ENCODE measurements at regions of chr18 and their contacts with region 1.

Region 1: DNA sequence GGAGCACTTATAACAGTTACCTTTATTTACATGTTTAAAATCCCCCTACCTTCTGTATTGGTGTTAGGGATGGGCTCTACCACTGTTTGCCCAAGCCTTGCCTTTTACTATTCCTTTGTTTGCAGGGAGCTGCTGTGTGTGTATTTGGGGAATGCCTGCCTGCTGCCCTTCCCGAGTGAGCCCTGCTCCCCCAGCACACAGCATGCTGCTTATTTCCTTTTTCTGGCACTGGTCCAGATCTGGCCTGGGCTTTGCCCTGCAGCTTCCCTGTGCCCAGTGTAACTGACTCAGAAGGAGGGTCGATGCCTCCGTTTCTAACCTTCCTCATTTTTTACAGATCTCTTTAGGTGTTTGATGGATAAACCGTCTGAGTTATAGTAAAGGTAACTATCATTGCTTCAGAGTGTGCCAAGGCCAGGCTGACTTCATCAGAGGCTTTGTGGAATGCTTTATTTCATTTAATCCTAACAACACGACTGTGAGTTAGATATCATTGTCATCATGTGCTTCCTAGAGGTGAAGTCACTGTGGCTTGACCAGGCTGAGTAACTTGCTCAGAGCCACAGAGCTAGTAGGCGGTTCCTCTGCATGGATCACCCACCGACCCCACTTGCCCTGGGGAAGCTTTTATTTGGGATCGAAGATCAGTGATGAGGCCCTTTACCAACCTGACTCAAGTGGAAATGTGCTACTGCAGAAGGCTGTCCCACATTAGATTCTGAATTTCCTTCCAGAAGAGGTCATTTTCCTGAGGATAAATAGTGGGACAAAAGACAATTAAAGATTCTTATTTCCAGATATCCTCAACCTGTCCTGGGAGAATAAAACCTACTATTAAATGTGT is 238.8 kb downstream of the ZNF407 start:
- DNase-seq: peak; percentile 69
- H3K4me3 ChIP-seq: no peak overlapping the region
- H3K27ac ChIP-seq: peak overlapping the region; percentile 21
- H3K4me1 ChIP-seq: peaks cover 37% of the 10 kb centered on the region
- H3K27me3 ChIP-seq: no peaks in the 10 kb centered on the region
- CTCF ChIP-seq: no peak
- POLR2A ChIP-seq: no peak

Region 2: DNA sequence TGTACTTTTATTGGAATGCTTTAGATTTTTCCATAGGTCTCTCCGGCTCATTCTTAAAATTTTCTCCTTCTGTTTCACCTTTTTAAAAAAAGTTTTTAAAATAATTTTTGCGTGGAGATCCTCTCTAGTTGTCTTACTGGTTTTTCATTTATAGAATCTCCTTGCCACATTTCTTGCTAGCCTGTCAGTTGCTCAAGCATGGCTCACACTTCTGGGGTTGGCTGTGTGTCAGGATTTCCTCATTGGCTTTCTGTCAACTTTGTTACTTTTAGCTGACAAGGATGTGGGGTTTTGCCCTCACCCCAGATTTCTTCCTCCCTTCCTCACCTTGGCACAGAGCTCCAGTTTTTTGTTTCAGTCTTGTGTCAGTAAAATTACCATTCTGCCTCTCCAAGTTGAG is 114.3 kb before region 1 on chr18:
- CTCF ChIA-PET with region 1: interaction called, 3 read pairs
- POLR2A ChIA-PET with region 1: no interaction called
- dilution Hi-C with region 1: no loop called
- intact Hi-C with region 1: loop called (anchors 5 kb)
- DNase-seq: peak; percentile 64
- H3K4me3 ChIP-seq: no peak overlapping the region
- H3K27ac ChIP-seq: no peak overlapping the region
- H3K4me1 ChIP-seq: peaks cover 3% of the 10 kb centered on the region
- H3K27me3 ChIP-seq: no peaks in the 10 kb centered on the region
- CTCF ChIP-seq: no peak
- POLR2A ChIP-seq: no peak

Region 3: DNA sequence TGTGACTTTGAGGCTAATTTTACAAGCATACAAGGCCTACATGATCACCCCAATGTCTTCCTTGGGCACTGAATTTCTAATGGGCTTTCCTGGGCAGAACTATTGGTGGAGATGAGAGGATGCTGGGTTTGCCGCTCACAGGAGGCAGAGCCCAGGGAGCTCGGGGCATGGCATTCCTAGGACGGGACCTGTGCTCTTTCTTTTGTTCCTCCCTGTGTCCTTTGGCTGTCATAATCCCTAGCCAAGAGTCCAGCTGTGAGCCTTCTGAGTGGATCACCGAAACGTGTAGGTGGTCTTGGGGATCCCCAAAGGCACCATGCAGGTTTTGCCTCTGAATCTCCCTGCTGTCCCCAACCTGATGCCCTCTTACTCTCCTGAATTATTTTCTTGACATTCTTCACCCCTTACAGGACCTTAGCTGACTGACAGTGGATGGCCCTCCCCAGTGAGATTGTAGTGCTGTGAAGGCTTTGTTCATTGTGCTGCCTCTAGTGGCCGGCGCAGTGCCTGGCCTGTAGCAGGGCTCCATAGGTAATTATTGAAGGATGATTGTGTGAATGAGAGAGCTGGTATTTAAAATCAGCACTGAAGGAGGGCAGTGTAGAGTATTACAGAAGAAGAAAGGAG is 17.0 kb before region 1 on chr18:
- CTCF ChIA-PET with region 1: interaction called, 10 read pairs
- POLR2A ChIA-PET with region 1: no interaction called
- dilution Hi-C with region 1: no loop called
- intact Hi-C with region 1: no loop called
- DNase-seq: no peak
- H3K4me3 ChIP-seq: no peak overlapping the region
- H3K27ac ChIP-seq: no peak overlapping the region
- H3K4me1 ChIP-seq: no peaks in the 10 kb centered on the region
- H3K27me3 ChIP-seq: no peaks in the 10 kb centered on the region
- CTCF ChIP-seq: peak; percentile 52 to 55
- POLR2A ChIP-seq: no peak

Region 4: GRCh38 chr18:74906184-74906583 is 69.7 kb after region 1 on chr18:
- CTCF ChIA-PET with region 1: no interaction called
- POLR2A ChIA-PET with region 1: no interaction called
- dilution Hi-C with region 1: no loop called
- intact Hi-C with region 1: loop called (anchors 10 kb)
- DNase-seq: no peak
- H3K4me3 ChIP-seq: no peak overlapping the region
- H3K27ac ChIP-seq: no peak overlapping the region
- H3K4me1 ChIP-seq: no peaks in the 10 kb centered on the region
- H3K27me3 ChIP-seq: no peaks in the 10 kb centered on the region
- CTCF ChIP-seq: no peak
- POLR2A ChIP-seq: no peak

Region 5: GRCh38 chr18:75070625-75071483 is 234.3 kb after region 1 on chr18:
- CTCF ChIA-PET with region 1: no interaction called
- POLR2A ChIA-PET with region 1: no interaction called
- dilution Hi-C with region 1: no loop called
- intact Hi-C with region 1: loop called (anchors 1 kb)
- DNase-seq: peak; percentile 94
- H3K4me3 ChIP-seq: peak overlapping the region in 1 of 3 experiments; percentile 45
- H3K27ac ChIP-seq: peak overlapping the region; percentile 99
- H3K4me1 ChIP-seq: peaks cover 44% of the 10 kb centered on the region
- H3K27me3 ChIP-seq: no peaks in the 10 kb centered on the region
- CTCF ChIP-seq: no peak
- POLR2A ChIP-seq: peak; percentile 68